ENCODE measurements at regions of chr11 and their contacts with region 1.

Region 1: GRCh38 chr11:118907051-118908042 is 18.4 kb downstream of the BCL9L start:
- DNase-seq: peak; percentile 80
- H3K4me3 Mint-ChIP-seq: no peak overlapping the region
- H3K27ac Mint-ChIP-seq: peak overlapping the region; percentile 40
- H3K4me1 Mint-ChIP-seq: peaks cover 19% of the 10 kb centered on the region
- H3K27me3 Mint-ChIP-seq: no peaks in the 10 kb centered on the region

Region 2: DNA sequence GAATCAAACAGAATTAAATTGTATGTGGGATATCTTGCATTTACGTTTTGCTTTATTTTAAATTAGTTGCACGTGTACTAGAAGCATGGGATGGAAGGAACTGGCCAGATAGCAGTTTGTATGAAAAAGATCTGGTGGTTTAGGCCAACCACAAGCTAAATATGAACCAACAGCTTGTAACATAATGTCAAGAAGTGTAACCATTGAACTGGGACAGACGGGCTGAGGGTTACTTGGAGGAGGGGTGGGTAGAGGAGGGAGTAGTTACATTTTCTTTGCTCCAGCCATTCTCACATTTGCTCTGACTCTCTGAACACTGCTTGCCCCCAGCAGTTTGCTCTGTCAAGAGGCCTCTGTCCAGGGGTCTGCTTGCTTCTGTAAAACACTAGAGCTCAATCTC is 55.4 kb before region 1 on chr11:
- intact Hi-C with region 1: no loop called
- DNase-seq: no peak
- H3K4me3 Mint-ChIP-seq: no peak overlapping the region
- H3K27ac Mint-ChIP-seq: no peak overlapping the region
- H3K4me1 Mint-ChIP-seq: no peaks in the 10 kb centered on the region
- H3K27me3 Mint-ChIP-seq: peaks cover 6% of the 10 kb centered on the region

Region 3: GRCh38 chr11:118997627-118998387 is 90.5 kb after region 1 on chr11 and contains the start of gene CENATAC:
- intact Hi-C with region 1: loop called (anchors 5 kb)
- DNase-seq: peak; percentile 96
- H3K4me3 Mint-ChIP-seq: peak within 1 kb of the TSS; percentile 96
- H3K27ac Mint-ChIP-seq: peak within 1 kb of the TSS; percentile 97
- H3K4me1 Mint-ChIP-seq: peaks cover 27% of the 10 kb centered on the region
- H3K27me3 Mint-ChIP-seq: no peaks in the 10 kb centered on the region
- total RNA-seq, gene CENATAC: 50.1 and 53.6 TPM in 2 replicates

Measured in activated T-helper 1 cell treated with anti-CD3 and anti-CD28 coated beads, Interleukin-12 subunit alpha, Interleukin-12 subunit beta, Interleukin-2, Interleukin-4 antibody, amounts not matched to agents 30 ng/mL and 10 ng/mL and 1 ng/mL, durations not matched to agents 14 hours and 24 hours and 36 hours (primary cell).